GM23248 (cell line): ENCODE measurements at regions of chr11 and their contacts with region 1.

Region 1: GRCh38 chr11:7986768-7987559 is at the start of gene EIF3F:
- DNase-seq: peak; percentile 99
- H3K4me3 ChIP-seq: peak within 1 kb of the TSS; percentile 100
- H3K27ac ChIP-seq: peak within 1 kb of the TSS; percentile 44; the same call in 1 of the 2 replicates
- H3K4me1 ChIP-seq: peaks cover 42% of the 10 kb centered on the region
- H3K27me3 ChIP-seq: no peaks in the 10 kb centered on the region
- total RNA-seq, gene EIF3F: 272 and 359 TPM in 2 replicates

Region 2: GRCh38 chr11:7892840-7893254 is 94.1 kb before region 1 on chr11:
- in situ Hi-C with region 1: loop called (anchors 5 kb)
- DNase-seq: peak; percentile 79
- H3K4me3 ChIP-seq: 0 out of 2 replicates have a peak overlapping the region, but pooled peaks have one; percentile 8
- H3K27ac ChIP-seq: peak overlapping the region; percentile 69
- H3K4me1 ChIP-seq: peaks cover 57% of the 10 kb centered on the region
- H3K27me3 ChIP-seq: no peaks in the 10 kb centered on the region